H1 (cell line): ENCODE measurements at regions of chr11 and their contacts with region 1.

Region 1: GRCh38 chr11:117426269-117426685 is 98.6 kb downstream of the CEP164 start:
- DNase-seq: peak; percentile 57 to 99
- H3K4me3 ChIP-seq: no peak overlapping the region; a peak in 2 of 8 replicates
- H3K27ac ChIP-seq: no peak overlapping the region
- H3K4me1 ChIP-seq: peaks cover 0 to 7% (median 4%) of the 10 kb centered on the region in 4 experiments; a peak in 6 of 7 replicates
- H3K27me3 ChIP-seq: no peaks in the 10 kb centered on the region; a peak in 1 of 7 replicates
- CTCF ChIP-seq: peak; percentile 93 to 99 (median 97)
- EP300 ChIP-seq: no peak
- POLR2A ChIP-seq: no peak
- RAD21 ChIP-seq: peak; percentile 96 to 98

Region 2: GRCh38 chr11:117333917-117334316 is 92.4 kb before region 1 on chr11:
- CTCF ChIA-PET with region 1: no interaction called
- POLR2A ChIA-PET with region 1: no interaction called
- DNase-seq: no peak
- H3K4me3 ChIP-seq: no peak overlapping the region
- H3K27ac ChIP-seq: no peak overlapping the region
- H3K4me1 ChIP-seq: no peaks in the 10 kb centered on the region
- H3K27me3 ChIP-seq: no peaks in the 10 kb centered on the region
- CTCF ChIP-seq: no peak
- EP300 ChIP-seq: no peak
- POLR2A ChIP-seq: no peak
- RAD21 ChIP-seq: no peak

Region 3: DNA sequence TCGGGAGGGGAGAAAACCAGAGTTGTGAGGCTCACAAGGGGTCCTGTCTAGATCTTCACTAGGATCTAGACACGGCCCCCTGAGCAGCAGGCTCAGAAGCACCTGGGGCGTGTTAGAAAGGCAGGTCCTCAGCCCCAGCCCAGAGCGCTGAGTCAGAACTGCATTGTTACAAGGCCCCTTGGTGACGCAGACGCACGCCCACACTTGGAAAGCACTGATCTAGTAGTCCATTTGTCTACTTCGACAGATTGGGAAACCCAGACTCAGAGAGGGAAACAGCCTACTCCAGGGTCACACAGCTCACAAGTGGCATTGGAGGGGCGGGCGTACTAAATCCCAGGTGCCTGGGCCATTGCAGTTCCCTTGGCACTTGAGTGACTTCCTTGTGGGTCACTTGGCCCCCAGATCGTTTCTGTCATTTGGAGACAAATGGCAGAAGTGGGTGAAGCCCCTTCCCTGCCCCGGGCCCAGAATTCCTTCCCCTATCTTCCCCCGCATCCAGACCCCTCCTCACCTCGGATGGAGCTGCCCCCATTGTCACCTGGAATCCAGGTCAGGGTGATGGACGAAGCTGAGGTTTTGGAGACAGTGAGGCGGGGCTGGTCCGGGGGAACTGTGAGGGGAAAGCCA is 12.2 kb after region 1 on chr11:
- CTCF ChIA-PET with region 1: interaction called, 75 read pairs
- POLR2A ChIA-PET with region 1: interaction called, 4 read pairs
- DNase-seq: no peak
- H3K4me3 ChIP-seq: no peak overlapping the region
- H3K27ac ChIP-seq: no peak overlapping the region
- H3K4me1 ChIP-seq: peaks cover 0 to 8% (median 3%) of the 10 kb centered on the region in 4 experiments; a peak in 5 of 7 replicates
- H3K27me3 ChIP-seq: peaks cover 0 to 3% (median 0%) of the 10 kb centered on the region in 4 experiments; a peak in 1 of 7 replicates
- CTCF ChIP-seq: no peak
- EP300 ChIP-seq: no peak
- POLR2A ChIP-seq: no peak
- RAD21 ChIP-seq: no peak

Region 4: GRCh38 chr11:117468888-117469287 is 42.6 kb after region 1 on chr11:
- CTCF ChIA-PET with region 1: interaction called, 38 read pairs
- POLR2A ChIA-PET with region 1: no interaction called
- DNase-seq: no peak
- H3K4me3 ChIP-seq: no peak overlapping the region
- H3K27ac ChIP-seq: no peak overlapping the region
- H3K4me1 ChIP-seq: peaks cover 2 to 16% (median 5%) of the 10 kb centered on the region in 4 experiments; a peak in 6 of 7 replicates
- H3K27me3 ChIP-seq: no peaks in the 10 kb centered on the region
- CTCF ChIP-seq: peak; percentile 48 to 63 (median 56)
- EP300 ChIP-seq: no peak
- POLR2A ChIP-seq: no peak
- RAD21 ChIP-seq: peak; percentile 53 to 61

Region 5: DNA sequence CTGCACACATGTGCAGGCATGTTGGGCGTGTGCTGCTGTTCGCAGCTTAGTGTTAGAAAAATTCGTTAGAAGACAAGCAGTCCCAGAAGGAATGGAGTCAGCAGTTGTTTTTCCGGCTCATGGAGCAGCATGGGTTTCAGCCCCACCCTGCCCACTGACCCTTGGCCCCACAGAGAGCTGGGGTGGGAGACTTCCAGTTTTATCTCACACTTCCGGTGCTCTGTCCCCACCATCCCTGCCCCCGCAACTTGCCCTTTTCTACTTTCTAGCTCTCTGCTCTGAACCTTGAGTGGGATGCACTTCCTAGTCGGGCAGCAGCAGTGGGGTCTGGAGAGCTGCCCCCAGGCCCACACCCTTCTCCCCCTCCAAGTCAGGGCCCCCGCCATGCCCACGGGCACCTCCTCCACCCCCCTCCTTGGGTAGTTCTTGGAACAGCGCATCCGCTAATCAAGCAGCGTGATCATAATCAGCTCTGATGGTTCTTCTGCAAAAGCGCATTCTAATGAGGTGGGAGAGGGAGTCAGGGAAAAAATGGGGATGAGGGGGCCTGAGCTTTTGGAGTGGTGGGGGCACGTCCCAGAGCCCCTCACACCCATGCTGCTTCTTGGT is 85.8 kb after region 1 on chr11:
- CTCF ChIA-PET with region 1: interaction called, 27 read pairs
- POLR2A ChIA-PET with region 1: no interaction called
- DNase-seq: no peak
- H3K4me3 ChIP-seq: no peak overlapping the region
- H3K27ac ChIP-seq: no peak overlapping the region
- H3K4me1 ChIP-seq: peaks cover 7 to 23% (median 14%) of the 10 kb centered on the region in 4 experiments
- H3K27me3 ChIP-seq: no peaks in the 10 kb centered on the region
- CTCF ChIP-seq: no peak
- EP300 ChIP-seq: no peak
- POLR2A ChIP-seq: no peak
- RAD21 ChIP-seq: no peak

Region 6: GRCh38 chr11:117591316-117592039 is 165.2 kb after region 1 on chr11:
- CTCF ChIA-PET with region 1: interaction called, 13 read pairs
- POLR2A ChIA-PET with region 1: no interaction called
- DNase-seq: no peak
- H3K4me3 ChIP-seq: no peak overlapping the region
- H3K27ac ChIP-seq: no peak overlapping the region
- H3K4me1 ChIP-seq: no peaks in the 10 kb centered on the region; a peak in 1 of 7 replicates
- H3K27me3 ChIP-seq: peaks cover 0 to under 1% (median under 1%) of the 10 kb centered on the region in 4 experiments; a peak in 1 of 7 replicates
- CTCF ChIP-seq: no peak
- EP300 ChIP-seq: no peak
- POLR2A ChIP-seq: no peak
- RAD21 ChIP-seq: no peak

Region 7: GRCh38 chr11:117717485-117718314 is 291.4 kb after region 1 on chr11:
- CTCF ChIA-PET with region 1: interaction called, 16 read pairs
- POLR2A ChIA-PET with region 1: no interaction called
- DNase-seq: peak in 1 of 2 experiments; percentile 66
- H3K4me3 ChIP-seq: peak overlapping the region in 1 of 4 experiments; percentile 36; a peak in 1 of 8 replicates
- H3K27ac ChIP-seq: no peak overlapping the region
- H3K4me1 ChIP-seq: peaks cover 8 to 20% (median 13%) of the 10 kb centered on the region in 4 experiments
- H3K27me3 ChIP-seq: peaks cover 0 to 5% (median 2%) of the 10 kb centered on the region in 4 experiments; a peak in 3 of 7 replicates
- CTCF ChIP-seq: no peak
- EP300 ChIP-seq: no peak; a peak in 1 of 3 replicates
- POLR2A ChIP-seq: no peak
- RAD21 ChIP-seq: no peak; a peak in 1 of 4 replicates

Region 8: DNA sequence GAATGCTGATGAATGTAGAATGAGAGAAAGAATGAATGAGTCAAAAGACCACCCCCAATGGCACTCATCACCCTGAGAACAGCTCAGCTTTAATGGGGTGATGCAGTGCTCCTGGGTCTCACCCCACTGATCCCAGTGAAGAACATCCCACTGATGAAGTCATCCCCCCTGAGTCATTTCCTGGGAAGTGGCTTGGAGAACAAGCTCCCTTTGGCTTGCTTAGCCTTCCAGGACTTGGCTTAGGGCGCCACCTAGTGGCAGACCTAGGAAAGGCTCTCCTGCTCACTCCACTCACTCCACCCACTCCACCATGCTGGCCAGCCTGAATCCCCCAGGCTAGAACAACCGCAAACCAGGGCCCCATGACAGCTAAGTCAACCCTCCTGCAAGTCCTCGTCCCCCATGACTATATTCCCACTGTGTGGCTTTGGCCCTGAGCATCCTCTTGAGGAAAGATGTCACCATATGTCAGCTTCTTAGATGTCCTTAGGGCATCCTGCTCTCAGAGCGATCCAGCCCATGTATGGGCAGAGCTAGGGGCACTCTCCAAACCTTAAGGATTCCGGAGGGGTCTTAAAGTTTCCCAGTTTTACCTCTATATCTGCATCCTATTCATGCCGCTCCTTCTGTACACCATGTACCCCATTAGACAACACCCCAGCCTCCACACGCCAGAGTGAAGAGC is 520.7 kb after region 1 on chr11:
- CTCF ChIA-PET with region 1: interaction called, 18 read pairs
- POLR2A ChIA-PET with region 1: no interaction called
- DNase-seq: peak; percentile 81 to 99
- H3K4me3 ChIP-seq: no peak overlapping the region
- H3K27ac ChIP-seq: no peak overlapping the region
- H3K4me1 ChIP-seq: 0 out of 7 replicates have a peak, but pooled peaks cover 0 to 2% (median 0%) of the 10 kb centered on the region in 4 experiments
- H3K27me3 ChIP-seq: no peaks in the 10 kb centered on the region
- CTCF ChIP-seq: peak; percentile 87 to 98 (median 98)
- EP300 ChIP-seq: 0 out of 3 replicates have a peak, but pooled peaks of 1 of the 2 experiments have one; percentile 9
- POLR2A ChIP-seq: no peak
- RAD21 ChIP-seq: peak; percentile 98 to 99